ENCODE measurements at regions of chr2 and their contacts with region 1.

Region 1: DNA sequence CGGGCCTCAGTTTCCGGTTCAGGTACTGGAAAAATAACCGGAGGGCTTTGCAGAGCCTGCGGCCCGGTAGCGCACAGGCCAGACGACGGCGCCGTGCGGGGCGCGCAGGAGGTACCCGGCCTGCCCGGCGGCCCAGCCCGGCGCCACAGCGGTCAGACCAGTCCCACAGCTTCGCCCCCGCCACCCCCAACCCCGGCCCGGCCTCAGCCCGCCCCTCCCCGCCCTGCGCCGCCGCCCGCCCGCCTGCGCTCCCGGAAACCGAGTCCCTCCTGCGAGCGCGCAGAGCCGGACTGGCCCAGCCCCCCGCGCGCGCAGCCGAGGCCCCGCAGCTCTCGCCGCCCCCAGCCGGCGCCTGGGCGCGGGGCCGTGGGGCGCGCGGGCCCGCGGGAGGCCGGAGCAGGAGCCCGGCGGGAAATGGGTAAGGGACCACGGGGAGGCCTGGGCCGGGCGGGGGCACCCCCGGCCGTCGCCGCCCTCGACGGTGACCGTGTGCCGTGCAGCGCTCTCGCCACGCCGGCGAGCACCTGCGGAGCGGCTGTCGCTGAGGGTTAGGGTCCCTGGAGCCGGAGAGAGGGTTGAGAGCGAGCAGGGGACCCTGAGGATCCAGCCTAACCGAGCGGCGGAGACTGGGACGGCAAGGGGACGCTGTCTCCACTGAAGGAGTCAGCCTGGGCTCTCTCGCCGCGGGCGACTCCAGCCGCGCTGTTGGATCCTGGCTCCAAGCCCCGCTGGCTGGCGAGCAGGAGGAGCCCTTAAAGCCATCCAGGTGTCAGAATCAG is 16.5 kb upstream of the PSD4 start:
- DNase-seq: peak in 8 of 9 donors; percentile 39 to 67 (median 53)
- ATAC-seq: peak; percentile 90
- H3K4me3 ChIP-seq: peak overlapping the region; percentile 81
- H3K4me3 Mint-ChIP-seq: peak overlapping the region; percentile 84 to 94 (median 90)
- H3K27ac ChIP-seq: peak overlapping the region; percentile 74
- H3K27ac Mint-ChIP-seq: peak overlapping the region; percentile 77 to 93 (median 88)
- H3K4me1 ChIP-seq: peaks cover 14 to 20% of the 10 kb centered on the region in 2 donors
- H3K4me1 Mint-ChIP-seq: peaks cover 12 to 34% (median 28%) of the 10 kb centered on the region in 7 donors
- H3K27me3 ChIP-seq: no peaks in the 10 kb centered on the region
- H3K27me3 Mint-ChIP-seq: peaks cover 0 to 11% (median 0%) of the 10 kb centered on the region in 5 donors

Region 2: DNA sequence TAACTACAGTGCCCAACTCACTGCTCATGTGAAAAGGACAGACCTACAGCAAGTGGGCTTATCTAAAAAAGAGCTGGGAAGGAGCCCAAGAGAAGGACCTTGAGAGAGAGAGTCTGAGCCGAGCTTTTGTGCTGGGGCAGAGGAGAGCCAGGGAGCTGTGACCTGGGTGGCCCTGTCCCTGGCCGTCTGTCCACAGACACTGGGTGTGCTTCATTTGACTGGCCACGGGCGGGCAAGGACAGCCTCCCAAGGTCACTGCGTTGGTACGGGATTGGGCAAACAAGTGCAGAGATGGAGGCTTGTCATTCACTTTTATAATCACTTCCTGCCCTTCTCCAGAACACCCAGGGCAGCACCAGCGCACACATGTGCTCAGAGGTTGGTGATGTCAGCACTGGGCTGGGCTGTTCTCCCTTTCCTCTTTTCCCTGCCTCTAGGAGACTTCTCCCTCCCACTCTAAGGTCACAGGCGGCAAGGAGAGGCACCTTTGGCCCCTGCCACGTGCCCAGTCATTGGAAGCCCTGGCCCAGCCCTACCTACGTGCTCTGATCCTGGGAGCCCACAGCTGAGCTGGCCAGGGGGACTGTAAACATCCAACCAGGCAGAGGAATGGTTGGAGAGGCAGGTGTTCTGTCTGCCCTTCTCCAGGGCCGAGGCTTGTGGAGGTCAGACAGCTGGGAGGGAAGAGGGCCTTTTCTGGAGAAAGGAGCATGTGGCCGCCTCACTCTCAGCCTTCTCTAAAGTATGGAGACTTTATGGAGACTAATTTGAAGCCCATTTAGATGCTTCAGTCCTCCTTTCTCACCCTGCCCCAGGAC is 10.0 kb after region 1 on chr2:
- CTCF ChIA-PET with region 1: interaction called, 6 read pairs
- POLR2A ChIA-PET with region 1: interaction called, 172 read pairs
- intact Hi-C with region 1: loop called (anchors 1 kb)
- DNase-seq: peak in 6 of 9 donors; percentile 38 to 45 (median 41)
- ATAC-seq: peak; percentile 72
- H3K4me3 ChIP-seq: peak overlapping the region; percentile 34
- H3K4me3 Mint-ChIP-seq: peak overlapping the region; percentile 57 to 87 (median 78)
- H3K27ac ChIP-seq: peak overlapping the region; percentile 87
- H3K27ac Mint-ChIP-seq: peak overlapping the region; percentile 88 to 100 (median 97)
- H3K4me1 ChIP-seq: peaks cover 40 to 74% of the 10 kb centered on the region in 2 donors
- H3K4me1 Mint-ChIP-seq: peaks cover 61 to 88% (median 80%) of the 10 kb centered on the region in 7 donors
- H3K27me3 ChIP-seq: no peaks in the 10 kb centered on the region
- H3K27me3 Mint-ChIP-seq: no peaks in the 10 kb centered on the region

Region 3: GRCh38 chr2:113181258-113182051 is 24.1 kb after region 1 on chr2:
- CTCF ChIA-PET with region 1: interaction called, 29 read pairs
- POLR2A ChIA-PET with region 1: interaction called, 172 read pairs
- intact Hi-C with region 1: no loop called
- DNase-seq: peak in 2 of 9 donors; percentile 24 to 34
- ATAC-seq: peak; percentile 51
- H3K4me3 ChIP-seq: peak overlapping the region; percentile 43
- H3K4me3 Mint-ChIP-seq: peak overlapping the region; percentile 47 to 97 (median 76)
- H3K27ac ChIP-seq: peak overlapping the region; percentile 58
- H3K27ac Mint-ChIP-seq: peak overlapping the region; percentile 77 to 96 (median 93)
- H3K4me1 ChIP-seq: peaks cover 83 to 95% of the 10 kb centered on the region in 2 donors
- H3K4me1 Mint-ChIP-seq: peaks cover 79 to 98% (median 93%) of the 10 kb centered on the region in 7 donors
- H3K27me3 ChIP-seq: no peaks in the 10 kb centered on the region
- H3K27me3 Mint-ChIP-seq: no peaks in the 10 kb centered on the region

Region 4: GRCh38 chr2:113198790-113199612 is 41.7 kb after region 1 on chr2:
- CTCF ChIA-PET with region 1: interaction called, 8 read pairs
- POLR2A ChIA-PET with region 1: interaction called, 10 read pairs
- intact Hi-C with region 1: loop called (anchors 5 kb)
- DNase-seq: peak; percentile 57 to 86 (median 70)
- ATAC-seq: peak; percentile 88
- H3K4me3 ChIP-seq: no peak overlapping the region
- H3K4me3 Mint-ChIP-seq: no peak overlapping the region
- H3K27ac ChIP-seq: peak overlapping the region; percentile 44
- H3K27ac Mint-ChIP-seq: peak overlapping the region in 5 of 9 donors; percentile 36 to 75 (median 62)
- H3K4me1 ChIP-seq: peaks cover under 1 to 7% of the 10 kb centered on the region in 2 donors
- H3K4me1 Mint-ChIP-seq: peaks cover 3 to 54% (median 9%) of the 10 kb centered on the region in 7 donors
- H3K27me3 ChIP-seq: no peaks in the 10 kb centered on the region
- H3K27me3 Mint-ChIP-seq: no peaks in the 10 kb centered on the region

Region 5: DNA sequence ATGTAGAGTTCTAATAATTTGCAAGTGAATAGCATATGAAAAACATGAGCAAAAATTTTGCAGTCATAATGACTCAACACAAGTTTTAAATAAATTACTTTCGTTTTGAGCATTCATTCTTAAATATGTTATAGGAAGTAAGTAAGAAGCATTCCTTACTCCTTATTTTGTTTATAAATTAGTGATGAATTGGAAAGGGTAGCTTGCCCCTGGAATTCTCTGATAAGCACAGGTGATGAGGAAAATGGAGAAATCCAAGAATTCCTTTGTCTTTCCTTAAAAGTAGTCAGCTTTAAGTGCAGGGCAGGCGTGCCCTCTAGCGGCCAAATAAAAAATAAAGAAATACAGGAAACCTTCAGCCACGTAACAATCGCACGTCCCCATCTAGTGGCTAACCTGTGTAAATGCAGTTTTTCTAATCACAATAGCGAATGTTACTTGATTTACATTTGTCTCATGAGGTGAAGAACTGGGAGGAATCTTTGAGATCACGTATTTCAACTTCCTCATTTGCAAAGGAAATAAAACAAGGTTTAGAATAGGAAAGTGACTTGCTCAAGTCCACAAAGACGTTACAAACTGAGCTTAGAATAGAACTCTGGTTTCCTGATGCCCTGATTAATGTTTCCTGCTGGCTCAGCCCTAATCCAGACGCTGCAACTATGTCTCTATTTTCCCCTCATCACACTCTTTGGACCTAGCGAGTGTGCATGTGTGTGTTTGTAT is 233.0 kb after region 1 on chr2:
- CTCF ChIA-PET with region 1: no interaction called
- POLR2A ChIA-PET with region 1: no interaction called
- intact Hi-C with region 1: no loop called
- DNase-seq: peak in 8 of 9 donors; percentile 28 to 85 (median 82)
- ATAC-seq: peak; percentile 99
- H3K4me3 ChIP-seq: peak overlapping the region; percentile 73
- H3K4me3 Mint-ChIP-seq: peak overlapping the region; percentile 57 to 89 (median 77)
- H3K27ac ChIP-seq: no peak overlapping the region
- H3K27ac Mint-ChIP-seq: peak overlapping the region; percentile 22 to 84 (median 68)
- H3K4me1 ChIP-seq: no peaks in the 10 kb centered on the region
- H3K4me1 Mint-ChIP-seq: peaks cover 9 to 20% (median 16%) of the 10 kb centered on the region in 7 donors
- H3K27me3 ChIP-seq: no peaks in the 10 kb centered on the region
- H3K27me3 Mint-ChIP-seq: peaks cover 6 to 38% (median 11%) of the 10 kb centered on the region in 5 donors

Measured in naive thymus-derived CD4-positive, alpha-beta T cell (primary cell).